Cardiac septum (tissue), 1 donor: ENCODE measurements at regions of chr17 and their contacts with region 1.

Region 1: DNA sequence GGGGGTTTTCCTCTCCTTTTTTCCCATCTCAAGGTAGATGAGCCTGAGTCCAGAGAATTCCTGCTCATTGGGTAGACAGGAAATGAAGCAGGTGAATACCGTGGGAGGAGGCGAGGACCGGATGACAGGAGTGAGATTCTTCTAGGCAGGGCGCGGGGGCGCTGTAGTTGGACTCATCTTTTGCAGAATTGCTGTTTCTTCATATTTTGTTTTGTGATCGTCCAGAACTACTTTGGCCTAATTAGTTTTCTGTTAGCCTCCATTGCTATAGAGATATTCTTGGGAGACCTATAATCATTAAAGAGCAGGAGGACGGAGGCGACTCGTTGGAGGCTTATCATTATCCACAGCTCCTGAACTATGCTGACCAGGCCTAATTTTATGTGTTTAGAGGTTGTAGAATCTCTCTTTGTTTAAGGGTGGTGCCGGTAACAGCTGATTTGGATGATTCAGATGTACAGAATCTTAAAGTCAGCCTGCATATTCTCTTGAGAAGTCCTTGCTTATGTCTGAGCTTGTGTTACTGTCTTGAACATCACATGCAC is 650 bp downstream of the ATP6V0A1 start:
- DNase-seq: peak; percentile 77

Region 2: GRCh38 chr17:42287305-42287925 is 171.9 kb before region 1 on chr17:
- intact Hi-C with region 1: no loop called
- DNase-seq: peak; percentile 75

Region 3: DNA sequence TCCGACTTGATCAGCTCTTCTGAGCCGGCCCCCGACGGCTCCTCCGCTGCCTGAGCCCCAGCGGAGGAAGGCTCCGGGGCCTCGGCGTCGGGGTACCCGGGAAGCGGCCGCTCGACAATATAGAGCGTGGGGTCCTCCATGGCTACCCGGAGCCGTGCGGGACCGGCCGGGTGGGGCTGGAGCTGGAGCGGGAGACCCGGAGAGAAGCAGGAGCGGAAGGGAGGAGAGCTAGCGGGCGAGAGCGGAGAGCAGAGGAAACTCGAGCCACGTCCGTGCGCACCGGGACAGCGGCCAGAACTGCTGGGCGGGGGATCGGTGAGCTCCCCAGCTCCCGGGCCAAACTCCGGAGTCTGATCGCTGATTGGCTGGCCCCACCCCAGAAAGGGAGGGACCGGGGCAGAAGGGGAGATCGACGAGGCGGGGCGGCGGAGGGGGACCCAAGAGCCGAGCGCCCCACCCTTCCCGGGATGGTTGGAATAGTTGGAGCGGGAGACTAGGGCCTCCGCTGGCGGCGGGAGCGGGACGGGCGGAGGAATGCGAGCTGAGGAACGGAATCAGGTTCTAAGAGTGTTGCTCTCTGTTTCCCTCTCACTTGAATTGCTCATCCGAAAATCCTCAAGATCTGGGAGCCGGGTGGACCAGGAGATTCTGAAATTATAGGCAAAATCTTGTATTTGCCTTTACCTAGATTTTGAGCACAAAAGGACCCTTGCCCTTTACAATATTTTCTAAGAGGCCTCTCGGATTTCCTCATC is 36.2 kb before region 1 on chr17 and contains the start of gene CAVIN1:
- intact Hi-C with region 1: loop called (anchors 5 kb)
- DNase-seq: peak; percentile 99
- total RNA-seq, gene CAVIN1: 358 TPM

Region 4: GRCh38 chr17:42436391-42436790 is 22.9 kb before region 1 on chr17:
- intact Hi-C with region 1: loop called (anchors 1 kb)
- DNase-seq: no peak

Region 5: GRCh38 chr17:42598905-42599304 is 139.6 kb after region 1 on chr17:
- intact Hi-C with region 1: no loop called
- DNase-seq: no peak